H1 (cell line): ENCODE measurements at regions of chr6 and their contacts with region 1.

Region 1: DNA sequence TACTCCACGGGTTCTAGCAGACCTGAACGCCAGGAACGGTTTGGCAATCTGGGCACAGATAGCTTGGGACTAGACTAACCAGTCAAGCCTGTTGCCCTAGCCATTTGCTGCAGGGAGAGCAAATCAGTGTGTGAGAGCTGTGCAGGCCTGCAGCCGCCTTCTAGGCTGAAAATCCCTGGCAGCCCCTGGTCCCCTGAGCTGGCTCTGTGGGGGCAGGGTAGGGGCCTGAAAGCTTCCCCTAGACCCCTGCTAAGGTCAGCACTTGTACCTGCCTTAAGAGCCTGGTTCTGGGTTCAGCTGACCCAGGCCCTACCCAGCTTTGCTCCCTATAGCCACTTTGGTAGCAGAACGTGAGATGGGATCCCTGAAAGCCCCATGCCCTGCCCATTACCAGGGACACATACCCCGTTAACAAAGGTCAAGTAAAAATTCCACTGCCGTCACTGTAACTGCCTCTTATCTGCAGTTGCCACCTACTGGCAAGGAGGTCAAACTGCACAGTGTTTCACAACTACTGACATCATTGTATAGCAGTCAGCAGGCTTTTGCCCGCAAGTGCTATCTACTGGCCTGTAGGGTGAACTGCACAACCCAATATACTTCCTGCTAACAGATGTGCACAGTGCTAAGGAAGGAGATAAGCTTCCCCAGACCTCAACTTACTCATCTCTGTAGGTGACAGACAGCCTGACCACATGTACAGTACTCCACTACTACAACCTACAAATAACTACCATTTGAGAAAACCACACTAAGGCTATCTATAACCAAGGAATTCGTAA is 95.1 kb upstream of the OLIG3 start:
- DNase-seq: peak; percentile 38 to 65
- H3K4me3 ChIP-seq: no peak overlapping the region
- H3K27ac ChIP-seq: no peak overlapping the region
- H3K4me1 ChIP-seq: peaks cover 0 to 6% (median 5%) of the 10 kb centered on the region in 4 experiments; a peak in 4 of 7 replicates
- H3K27me3 ChIP-seq: no peaks in the 10 kb centered on the region; a peak in 1 of 7 replicates
- CTCF ChIP-seq: peak; percentile 55 to 100 (median 99)
- EP300 ChIP-seq: peak in 1 of 2 experiments; percentile 75; a peak in 1 of 3 replicates
- POLR2A ChIP-seq: no peak
- RAD21 ChIP-seq: peak; percentile 95 to 97

Region 2: DNA sequence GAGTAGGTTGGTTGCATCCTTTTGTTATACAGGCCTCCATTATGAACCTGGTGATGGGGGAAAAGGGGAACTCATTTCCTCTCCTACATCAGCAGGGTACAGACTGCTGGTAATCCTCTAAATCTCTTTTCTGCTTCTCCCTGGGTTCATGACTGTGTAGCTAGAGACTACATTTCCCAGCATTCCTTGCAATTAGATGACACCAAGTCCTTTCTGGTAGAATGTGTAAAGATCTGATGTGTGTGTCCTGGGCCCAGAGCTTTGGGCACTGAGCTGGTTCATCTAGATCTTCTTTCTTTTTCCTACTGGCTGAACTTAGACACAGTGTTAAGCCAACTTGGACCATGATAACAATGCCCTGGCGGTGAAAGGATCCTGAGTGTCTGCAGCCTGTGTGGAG is 265.4 kb before region 1 on chr6:
- CTCF ChIA-PET with region 1: interaction called, 12 read pairs
- POLR2A ChIA-PET with region 1: no interaction called
- DNase-seq: no peak
- H3K4me3 ChIP-seq: no peak overlapping the region
- H3K27ac ChIP-seq: no peak overlapping the region
- H3K4me1 ChIP-seq: peaks cover 0 to 2% (median 0%) of the 10 kb centered on the region in 4 experiments; a peak in 1 of 7 replicates
- H3K27me3 ChIP-seq: no peaks in the 10 kb centered on the region
- CTCF ChIP-seq: no peak
- EP300 ChIP-seq: no peak
- POLR2A ChIP-seq: no peak
- RAD21 ChIP-seq: no peak

Region 3: GRCh38 chr6:137443901-137444300 is 145.4 kb before region 1 on chr6:
- CTCF ChIA-PET with region 1: interaction called, 11 read pairs
- POLR2A ChIA-PET with region 1: no interaction called
- DNase-seq: no peak
- H3K4me3 ChIP-seq: no peak overlapping the region
- H3K27ac ChIP-seq: no peak overlapping the region
- H3K4me1 ChIP-seq: no peaks in the 10 kb centered on the region
- H3K27me3 ChIP-seq: no peaks in the 10 kb centered on the region
- CTCF ChIP-seq: peak in 2 of 3 experiments; percentile 6 to 30; a peak in 1 of 4 replicates
- EP300 ChIP-seq: no peak
- POLR2A ChIP-seq: no peak
- RAD21 ChIP-seq: peak; percentile 6 to 17; a peak in 2 of 4 replicates

Region 4: DNA sequence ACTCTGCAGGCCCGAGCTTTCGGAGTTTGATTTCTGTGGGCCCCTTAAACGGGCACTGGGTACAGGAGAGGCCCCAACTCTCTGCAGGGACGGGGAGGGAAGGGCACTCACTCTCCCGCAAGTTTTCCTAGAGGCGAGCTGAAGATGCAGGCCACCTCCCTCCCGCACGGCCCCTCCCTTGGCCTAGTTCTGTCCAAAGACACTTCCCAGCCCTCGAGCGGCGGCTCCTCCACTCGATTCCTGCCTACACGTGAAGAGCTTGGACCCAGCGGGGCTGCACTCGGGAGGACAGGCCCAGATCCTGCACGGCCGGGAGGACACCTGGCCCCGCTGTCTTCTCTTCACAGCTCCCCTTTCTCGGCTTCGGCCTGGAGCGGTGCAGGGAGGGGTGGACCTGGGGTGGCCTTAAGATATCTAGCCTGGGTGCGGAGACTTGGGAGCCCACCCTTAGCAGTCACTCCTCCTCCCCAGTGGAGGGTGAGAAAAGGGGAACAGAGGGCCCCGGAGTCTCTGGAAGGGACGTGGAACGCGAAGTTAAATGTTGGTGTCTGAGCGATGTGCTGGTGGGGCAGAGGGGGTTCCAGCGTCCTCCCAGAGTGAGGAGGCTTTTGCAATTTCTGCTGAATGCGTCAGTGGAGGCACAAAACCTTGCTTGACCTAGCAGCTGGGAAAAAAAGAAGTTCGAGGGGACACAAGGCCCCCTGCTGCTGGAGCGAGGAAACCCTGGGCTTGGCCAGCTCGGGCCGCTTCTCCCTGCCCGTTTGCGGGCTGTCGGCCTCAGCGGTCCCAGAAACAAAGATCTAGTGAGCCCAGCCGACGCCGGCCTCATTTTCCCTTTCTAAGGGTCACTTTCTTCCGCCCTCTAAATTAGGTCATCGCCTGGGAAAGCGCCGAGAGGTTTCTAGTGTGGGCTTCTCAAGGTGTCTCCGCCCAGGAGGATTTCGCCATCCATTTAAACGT is 99.9 kb before region 1 on chr6:
- CTCF ChIA-PET with region 1: interaction called, 62 read pairs
- POLR2A ChIA-PET with region 1: interaction called, 5 read pairs
- DNase-seq: peak in 1 of 2 experiments; percentile 84
- H3K4me3 ChIP-seq: peak overlapping the region; percentile 34 to 71 (median 62)
- H3K27ac ChIP-seq: no peak overlapping the region
- H3K4me1 ChIP-seq: peaks cover 12 to 46% (median 27%) of the 10 kb centered on the region in 4 experiments
- H3K27me3 ChIP-seq: peaks cover 47 to 95% (median 84%) of the 10 kb centered on the region in 4 experiments
- CTCF ChIP-seq: no peak
- EP300 ChIP-seq: no peak
- POLR2A ChIP-seq: no peak
- RAD21 ChIP-seq: no peak; a peak in 1 of 4 replicates

Region 5: GRCh38 chr6:137518386-137518983 is 70.8 kb before region 1 on chr6:
- CTCF ChIA-PET with region 1: interaction called, 35 read pairs
- POLR2A ChIA-PET with region 1: no interaction called
- DNase-seq: no peak
- H3K4me3 ChIP-seq: peak overlapping the region in 1 of 4 experiments; percentile 15; a peak in 1 of 8 replicates
- H3K27ac ChIP-seq: no peak overlapping the region
- H3K4me1 ChIP-seq: peaks cover 4 to 20% (median 14%) of the 10 kb centered on the region in 4 experiments; a peak in 6 of 7 replicates
- H3K27me3 ChIP-seq: peaks cover 0 to 3% (median 0%) of the 10 kb centered on the region in 4 experiments; a peak in 3 of 7 replicates
- CTCF ChIP-seq: no peak
- EP300 ChIP-seq: no peak
- POLR2A ChIP-seq: no peak
- RAD21 ChIP-seq: no peak

Region 6: DNA sequence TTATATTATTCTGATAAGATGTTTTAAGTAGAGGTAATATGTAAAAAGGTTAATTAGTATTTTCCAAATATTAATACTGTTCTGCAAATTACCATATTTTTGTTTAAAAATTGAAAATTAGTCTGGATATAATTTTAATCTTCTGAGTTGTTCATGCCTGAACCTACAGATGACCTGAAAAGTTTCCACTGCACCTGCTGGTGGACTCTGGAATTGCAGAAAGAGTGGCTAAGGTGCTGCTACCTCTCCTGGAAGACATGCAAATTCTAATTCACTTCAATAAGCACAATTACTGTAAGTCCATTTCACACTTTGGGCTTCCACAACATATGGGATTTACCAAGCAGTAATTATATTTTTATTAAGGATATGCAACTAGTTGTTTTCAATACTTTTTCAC is 17.4 kb before region 1 on chr6:
- CTCF ChIA-PET with region 1: interaction called, 102 read pairs
- POLR2A ChIA-PET with region 1: no interaction called
- DNase-seq: peak in 1 of 2 experiments; percentile 86
- H3K4me3 ChIP-seq: no peak overlapping the region
- H3K27ac ChIP-seq: no peak overlapping the region
- H3K4me1 ChIP-seq: no peaks in the 10 kb centered on the region
- H3K27me3 ChIP-seq: no peaks in the 10 kb centered on the region
- CTCF ChIP-seq: peak in 2 of 3 experiments; percentile 53 to 72; a peak in 3 of 4 replicates
- EP300 ChIP-seq: no peak
- POLR2A ChIP-seq: no peak
- RAD21 ChIP-seq: peak in 1 of 2 experiments; percentile 36; a peak in 2 of 4 replicates

Region 7: GRCh38 chr6:137623293-137623692 is 34.0 kb after region 1 on chr6:
- CTCF ChIA-PET with region 1: interaction called, 51 read pairs
- POLR2A ChIA-PET with region 1: no interaction called
- DNase-seq: no peak
- H3K4me3 ChIP-seq: no peak overlapping the region
- H3K27ac ChIP-seq: no peak overlapping the region
- H3K4me1 ChIP-seq: no peaks in the 10 kb centered on the region
- H3K27me3 ChIP-seq: no peaks in the 10 kb centered on the region
- CTCF ChIP-seq: no peak
- EP300 ChIP-seq: no peak
- POLR2A ChIP-seq: no peak
- RAD21 ChIP-seq: no peak